BJ (cell line): ENCODE measurements at regions of chr7 and their contacts with region 1.

Region 1: GRCh38 chr7:92178927-92179924 is at the start of gene LRRD1:
- DNase-seq: peak; percentile 25
- H3K4me3 ChIP-seq: peak within 1 kb of the TSS; percentile 37
- H3K27me3 ChIP-seq: no peaks in the 10 kb centered on the region
- CTCF ChIP-seq: peak; percentile 97
- polyA plus RNA-seq, gene LRRD1: 0.06 TPM in 1 of 2 replicates, not detected in the other

Region 2: GRCh38 chr7:92164559-92164958 is 14.7 kb before region 1 on chr7:
- CTCF ChIA-PET with region 1: interaction called, 10 read pairs
- POLR2A ChIA-PET with region 1: no interaction called
- DNase-seq: no peak
- H3K4me3 ChIP-seq: no peak overlapping the region
- H3K27me3 ChIP-seq: no peaks in the 10 kb centered on the region
- CTCF ChIP-seq: no peak

Region 3: DNA sequence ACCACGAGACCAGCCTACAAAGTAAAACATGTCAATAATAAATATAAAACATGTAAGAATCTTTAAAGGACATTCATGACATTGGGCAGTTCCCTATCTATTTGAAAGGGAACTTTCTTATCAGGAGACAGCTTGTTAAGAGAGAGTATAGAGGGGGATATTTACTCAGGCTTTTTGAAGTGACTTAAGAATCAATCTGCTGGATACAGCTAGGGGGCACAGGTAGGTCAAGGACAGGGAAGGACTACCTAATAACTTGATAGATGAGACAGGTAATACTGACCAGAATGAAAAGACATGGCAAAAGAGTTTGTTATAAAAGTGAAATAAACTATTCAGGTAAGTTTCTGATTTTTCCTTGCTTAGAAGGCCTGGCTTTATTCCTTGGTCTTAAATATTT is 21.6 kb after region 1 on chr7:
- CTCF ChIA-PET with region 1: interaction called, 17 read pairs
- POLR2A ChIA-PET with region 1: no interaction called
- DNase-seq: no peak
- H3K4me3 ChIP-seq: no peak overlapping the region
- H3K27me3 ChIP-seq: no peaks in the 10 kb centered on the region
- CTCF ChIP-seq: no peak

Region 4: DNA sequence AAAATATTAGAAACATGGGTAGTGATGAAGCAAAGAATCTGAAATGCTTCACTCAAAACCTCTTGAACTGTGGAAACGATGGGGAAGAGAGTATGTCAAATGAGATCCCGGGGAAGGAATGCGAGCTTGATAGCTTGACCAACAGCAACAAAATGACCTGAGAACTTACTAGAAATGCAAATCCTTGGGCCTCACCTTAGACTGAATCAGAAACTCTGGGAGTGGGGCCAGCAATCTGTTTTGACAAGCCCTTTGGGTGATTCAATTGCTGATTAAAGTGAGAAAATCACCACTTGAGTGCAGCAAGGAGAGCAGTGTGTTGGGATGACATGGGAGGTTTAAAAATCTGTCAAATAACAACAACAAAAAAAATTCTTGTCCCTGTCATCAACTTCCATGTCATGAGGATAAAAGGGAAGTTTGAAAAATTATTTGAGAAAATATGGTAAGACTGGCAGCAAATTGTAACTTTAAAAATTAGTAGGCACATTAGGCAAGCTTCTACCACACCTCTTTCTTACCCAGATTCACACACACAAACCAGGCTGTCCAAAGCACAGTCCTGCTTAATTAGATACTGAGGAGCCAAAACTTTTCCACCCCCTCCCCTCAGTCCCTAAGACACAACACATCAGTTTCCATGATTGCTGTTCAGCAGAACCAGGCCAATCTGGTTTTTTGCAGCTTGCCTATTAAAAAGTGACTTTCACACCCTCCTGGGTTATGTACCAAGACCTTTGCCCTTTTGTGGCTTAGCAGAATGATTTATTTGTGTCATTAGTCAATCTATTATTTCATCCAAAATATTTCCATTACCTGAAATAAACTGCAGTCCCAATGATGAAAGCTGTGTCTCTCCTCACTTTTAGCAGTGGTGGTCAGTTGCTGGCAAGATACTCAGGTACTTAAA is 1379.7 kb after region 1 on chr7:
- CTCF ChIA-PET with region 1: no interaction called
- POLR2A ChIA-PET with region 1: no interaction called
- DNase-seq: no peak
- H3K4me3 ChIP-seq: no peak overlapping the region
- H3K27me3 ChIP-seq: peaks cover 2% of the 10 kb centered on the region; the same call in 1 of the 2 replicates
- CTCF ChIP-seq: no peak